ENCODE measurements at regions of chr3 and their contacts with region 1.

Region 1: DNA sequence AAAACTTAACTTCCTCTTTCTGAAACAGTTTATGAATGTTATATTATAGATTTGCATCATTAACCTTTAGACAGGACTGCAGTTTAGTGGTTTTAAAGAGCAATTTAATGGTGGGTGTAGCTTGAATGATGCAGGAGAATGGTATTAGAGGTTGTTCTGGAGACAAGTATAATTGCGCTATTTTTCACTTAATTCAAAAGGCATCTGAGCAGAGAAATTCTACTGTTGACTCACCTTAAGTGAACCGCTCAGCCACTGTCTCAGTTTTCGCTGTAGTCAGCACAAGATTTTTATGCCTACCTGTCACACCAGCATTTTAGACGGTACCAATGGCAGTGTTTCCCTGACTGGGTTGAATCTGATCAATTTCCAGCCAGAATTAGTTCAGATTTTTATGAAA is 348.8 kb upstream of the DCBLD2 start:
- DNase-seq: no peak
- ATAC-seq: no peak
- H3K4me3 ChIP-seq: no peak overlapping the region
- H3K27ac ChIP-seq: peak overlapping the region in 1 of 2 donors; percentile 82
- H3K4me1 ChIP-seq: peaks cover 5 to 21% of the 10 kb centered on the region in 2 donors
- H3K27me3 ChIP-seq: no peaks in the 10 kb centered on the region

Region 2: GRCh38 chr3:99031778-99032177 is 218.5 kb before region 1 on chr3:
- intact Hi-C with region 1: no loop called
- DNase-seq: no peak
- ATAC-seq: no peak
- H3K4me3 ChIP-seq: no peak overlapping the region
- H3K27ac ChIP-seq: no peak overlapping the region
- H3K4me1 ChIP-seq: no peaks in the 10 kb centered on the region
- H3K27me3 ChIP-seq: no peaks in the 10 kb centered on the region

Region 3: GRCh38 chr3:99298661-99299060 is 48.4 kb after region 1 on chr3:
- intact Hi-C with region 1: no loop called
- DNase-seq: no peak
- ATAC-seq: no peak
- H3K4me3 ChIP-seq: no peak overlapping the region
- H3K27ac ChIP-seq: no peak overlapping the region
- H3K4me1 ChIP-seq: no peaks in the 10 kb centered on the region
- H3K27me3 ChIP-seq: no peaks in the 10 kb centered on the region

Region 4: DNA sequence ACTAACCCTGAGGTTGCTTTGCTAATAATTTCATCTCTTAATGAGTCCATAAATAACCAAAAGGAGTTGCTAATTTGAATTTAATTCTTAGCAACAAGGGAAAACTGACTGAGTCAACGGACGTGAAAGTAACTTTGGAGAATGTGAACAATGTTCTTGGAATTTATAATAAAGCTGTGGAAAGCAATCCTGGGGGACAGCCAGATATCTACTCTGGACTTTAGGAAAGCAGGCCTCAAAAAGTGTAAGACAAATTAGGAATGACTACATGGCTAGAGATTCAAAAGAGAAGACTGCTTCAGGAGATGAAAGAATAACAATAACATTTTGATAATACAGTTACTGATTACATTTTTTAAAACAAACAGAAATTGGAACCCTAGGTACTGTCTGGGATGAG is 69.7 kb after region 1 on chr3:
- intact Hi-C with region 1: loop called in 1 of 2 experiments (anchors 5 kb)
- DNase-seq: no peak
- ATAC-seq: no peak
- H3K4me3 ChIP-seq: no peak overlapping the region
- H3K27ac ChIP-seq: peak overlapping the region in 1 of 2 donors; percentile 43
- H3K4me1 ChIP-seq: no peaks in the 10 kb centered on the region
- H3K27me3 ChIP-seq: no peaks in the 10 kb centered on the region

Region 5: GRCh38 chr3:99410789-99411311 is 160.6 kb after region 1 on chr3:
- intact Hi-C with region 1: loop called in 1 of 2 experiments (anchors 2 kb)
- DNase-seq: peak in 1 of 2 donors; percentile 47
- ATAC-seq: no peak
- H3K4me3 ChIP-seq: no peak overlapping the region
- H3K27ac ChIP-seq: peak overlapping the region in 1 of 2 donors; percentile 40
- H3K4me1 ChIP-seq: peaks cover 0 to 4% of the 10 kb centered on the region in 2 donors
- H3K27me3 ChIP-seq: no peaks in the 10 kb centered on the region

Region 6: DNA sequence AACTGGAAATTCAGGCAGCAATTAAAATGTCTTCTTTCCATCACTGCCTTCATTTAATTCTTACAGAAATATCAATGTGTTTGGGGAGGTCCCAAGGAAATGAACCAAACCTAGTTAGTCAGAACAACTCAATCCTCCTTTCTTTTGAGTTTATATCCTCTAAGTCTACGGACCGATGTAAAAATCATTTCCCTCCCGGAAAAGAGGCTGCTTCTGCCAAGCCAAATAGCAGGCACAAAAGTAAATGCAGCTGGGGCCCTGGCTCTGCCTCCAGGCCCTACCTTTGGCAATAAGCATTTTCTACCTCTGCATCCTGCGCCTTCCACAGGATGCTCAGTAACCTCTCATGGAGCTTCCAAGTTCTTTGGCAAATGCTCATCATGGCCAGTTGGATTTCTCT is 265.6 kb after region 1 on chr3:
- intact Hi-C with region 1: no loop called
- DNase-seq: no peak
- ATAC-seq: no peak
- H3K4me3 ChIP-seq: no peak overlapping the region
- H3K27ac ChIP-seq: peak overlapping the region in 1 of 2 donors; percentile 51
- H3K4me1 ChIP-seq: no peaks in the 10 kb centered on the region
- H3K27me3 ChIP-seq: no peaks in the 10 kb centered on the region

Measured in aorta (tissue), 5 donors.